Left colon (tissue), 2 donors: ENCODE measurements at regions of chr11 and their contacts with region 1.

Region 1: GRCh38 chr11:41334007-41334933 is 125.2 kb downstream of the LRRC4C start:
- DNase-seq: no peak
- ATAC-seq: no peak

Region 2: GRCh38 chr11:40894501-40894900 is 439.8 kb before region 1 on chr11:
- intact Hi-C with region 1: no loop called
- DNase-seq: no peak
- ATAC-seq: no peak

Region 3: GRCh38 chr11:41392596-41392995 is 58.3 kb after region 1 on chr11:
- intact Hi-C with region 1: loop called in 1 of 2 experiments (anchors 10 kb)
- DNase-seq: no peak
- ATAC-seq: no peak

Region 4: DNA sequence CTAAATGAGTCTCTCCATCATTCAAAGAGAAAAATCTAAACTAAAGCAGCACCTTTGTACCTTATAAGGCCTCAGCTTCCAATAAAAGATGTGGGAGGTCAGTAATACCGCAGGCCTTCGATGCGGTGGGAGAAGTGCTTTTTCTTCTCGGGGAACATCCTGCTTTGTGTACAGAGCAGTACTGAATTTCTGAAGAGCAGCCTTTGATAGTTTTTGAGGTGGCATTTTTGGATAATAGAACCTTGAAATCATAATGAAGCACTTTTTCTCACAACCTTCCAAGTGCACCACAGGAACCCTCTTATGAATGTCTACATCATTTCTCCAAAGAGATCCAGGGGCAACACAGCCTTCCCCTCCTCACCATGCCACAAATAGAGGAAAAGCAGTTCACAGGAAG is 85.6 kb after region 1 on chr11:
- intact Hi-C with region 1: no loop called
- DNase-seq: no peak
- ATAC-seq: no peak

Region 5: GRCh38 chr11:41665441-41666360 is 331.4 kb after region 1 on chr11:
- intact Hi-C with region 1: no loop called
- DNase-seq: no peak
- ATAC-seq: no peak

Region 6: GRCh38 chr11:41895081-41895480 is 560.8 kb after region 1 on chr11:
- intact Hi-C with region 1: no loop called
- DNase-seq: no peak
- ATAC-seq: no peak